H1 (cell line): ENCODE measurements at regions of chr5 and their contacts with region 1.

Region 1: GRCh38 chr5:147887024-147887627 is 8.6 kb downstream of the SCGB3A2 start:
- DNase-seq: no peak
- H3K4me3 ChIP-seq: no peak overlapping the region
- H3K27ac ChIP-seq: no peak overlapping the region
- H3K4me1 ChIP-seq: peaks cover 0 to 7% (median 0%) of the 10 kb centered on the region in 4 experiments; a peak in 4 of 7 replicates
- H3K27me3 ChIP-seq: no peaks in the 10 kb centered on the region
- CTCF ChIP-seq: peak in 2 of 3 experiments; percentile 43 to 50; a peak in 2 of 4 replicates
- EP300 ChIP-seq: no peak
- POLR2A ChIP-seq: no peak
- RAD21 ChIP-seq: peak; percentile 68 to 72

Region 2: DNA sequence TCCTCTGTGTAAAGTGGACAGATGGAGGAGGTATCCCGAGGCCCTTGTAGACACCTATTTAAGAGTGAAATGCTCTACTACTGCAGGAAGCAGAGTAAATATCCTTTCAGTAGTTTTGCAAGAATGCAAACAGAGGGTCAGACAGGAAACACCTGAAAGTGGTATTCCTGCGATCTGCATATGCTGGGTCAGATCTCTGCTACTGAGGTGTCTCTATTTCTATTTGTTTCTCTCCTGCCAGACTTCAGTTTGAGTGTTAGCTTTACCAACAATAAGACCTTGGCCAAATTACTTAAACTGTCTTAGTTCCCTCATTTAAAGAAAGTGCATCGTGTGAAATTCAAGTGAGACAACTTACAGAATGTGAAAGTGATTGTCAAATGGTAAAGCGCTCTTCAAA is 152.2 kb before region 1 on chr5:
- CTCF ChIA-PET with region 1: no interaction called
- POLR2A ChIA-PET with region 1: no interaction called
- DNase-seq: no peak
- H3K4me3 ChIP-seq: no peak overlapping the region
- H3K27ac ChIP-seq: no peak overlapping the region
- H3K4me1 ChIP-seq: peaks cover 0 to 1% (median 0%) of the 10 kb centered on the region in 4 experiments; a peak in 3 of 7 replicates
- H3K27me3 ChIP-seq: no peaks in the 10 kb centered on the region
- CTCF ChIP-seq: no peak
- EP300 ChIP-seq: no peak
- POLR2A ChIP-seq: no peak
- RAD21 ChIP-seq: no peak

Region 3: DNA sequence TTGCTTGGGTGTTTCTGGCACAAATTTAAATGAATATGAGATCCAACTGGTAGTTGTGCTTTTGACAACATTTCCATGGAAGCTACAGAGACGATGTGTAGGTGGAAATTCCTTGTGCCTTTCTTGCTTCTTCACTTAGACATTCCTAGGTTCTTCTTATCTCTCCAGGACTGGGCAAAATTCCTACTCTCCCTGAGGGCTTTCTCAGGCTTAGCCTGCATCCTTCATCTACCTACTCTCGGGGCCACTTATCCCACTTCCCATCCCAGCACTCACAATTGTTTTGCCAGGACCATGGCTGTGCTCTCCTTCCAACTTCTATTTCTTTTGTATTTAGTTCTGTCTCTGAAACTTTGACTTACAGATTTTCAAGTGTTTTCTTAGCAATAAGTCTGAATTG is 37.9 kb before region 1 on chr5:
- CTCF ChIA-PET with region 1: interaction called, 13 read pairs
- POLR2A ChIA-PET with region 1: interaction called, 730 read pairs
- DNase-seq: no peak
- H3K4me3 ChIP-seq: no peak overlapping the region
- H3K27ac ChIP-seq: no peak overlapping the region
- H3K4me1 ChIP-seq: no peaks in the 10 kb centered on the region
- H3K27me3 ChIP-seq: peaks cover 0 to 2% (median 0%) of the 10 kb centered on the region in 4 experiments; a peak in 1 of 7 replicates
- CTCF ChIP-seq: no peak
- EP300 ChIP-seq: no peak
- POLR2A ChIP-seq: no peak; a peak in 1 of 3 replicates
- RAD21 ChIP-seq: no peak

Region 4: GRCh38 chr5:147857302-147858129 is 29.6 kb before region 1 on chr5:
- CTCF ChIA-PET with region 1: interaction called, 69 read pairs
- POLR2A ChIA-PET with region 1: interaction called, 730 read pairs
- DNase-seq: peak; percentile 50 to 76
- H3K4me3 ChIP-seq: no peak overlapping the region
- H3K27ac ChIP-seq: no peak overlapping the region
- H3K4me1 ChIP-seq: peaks cover 2 to 16% (median 13%) of the 10 kb centered on the region in 4 experiments; a peak in 5 of 7 replicates
- H3K27me3 ChIP-seq: no peaks in the 10 kb centered on the region
- CTCF ChIP-seq: peak in 2 of 3 experiments; percentile 61 to 83; a peak in 3 of 4 replicates
- EP300 ChIP-seq: no peak
- POLR2A ChIP-seq: no peak; a peak in 1 of 3 replicates
- RAD21 ChIP-seq: peak; percentile 85 to 86

Region 5: DNA sequence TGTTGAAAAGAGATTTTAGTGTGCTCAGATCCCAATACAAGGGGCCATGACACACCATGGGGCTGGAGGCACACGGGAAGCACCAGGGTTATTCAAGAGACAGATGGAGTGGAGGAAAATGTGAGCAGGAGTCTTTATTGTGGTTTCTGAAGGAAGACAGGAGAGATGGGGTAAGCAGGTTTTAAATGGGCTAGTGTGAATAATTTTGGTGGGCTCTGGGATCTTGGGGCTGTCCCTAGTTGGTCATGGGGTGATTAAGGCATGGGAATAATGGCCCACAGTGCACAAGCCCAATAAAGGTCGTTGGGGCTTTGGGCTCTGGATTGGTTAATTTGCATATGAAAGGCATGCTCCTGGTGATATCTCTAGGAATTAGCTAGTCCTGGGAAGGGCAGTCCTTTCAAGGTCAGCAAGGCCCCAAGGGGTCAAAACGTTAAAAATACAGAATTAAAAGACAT is 12.2 kb before region 1 on chr5:
- CTCF ChIA-PET with region 1: interaction called, 7 read pairs
- POLR2A ChIA-PET with region 1: interaction called, 730 read pairs
- DNase-seq: no peak
- H3K4me3 ChIP-seq: peak overlapping the region; percentile 7 to 96 (median 46); a peak in 7 of 8 replicates
- H3K27ac ChIP-seq: peak overlapping the region; percentile 79
- H3K4me1 ChIP-seq: peaks cover 11 to 24% (median 18%) of the 10 kb centered on the region in 4 experiments; a peak in 6 of 7 replicates
- H3K27me3 ChIP-seq: no peaks in the 10 kb centered on the region
- CTCF ChIP-seq: no peak
- EP300 ChIP-seq: no peak
- POLR2A ChIP-seq: no peak
- RAD21 ChIP-seq: no peak

Region 6: GRCh38 chr5:147997486-147997885 is 110.4 kb after region 1 on chr5:
- CTCF ChIA-PET with region 1: no interaction called
- POLR2A ChIA-PET with region 1: no interaction called
- DNase-seq: no peak
- H3K4me3 ChIP-seq: no peak overlapping the region
- H3K27ac ChIP-seq: no peak overlapping the region
- H3K4me1 ChIP-seq: no peaks in the 10 kb centered on the region
- H3K27me3 ChIP-seq: no peaks in the 10 kb centered on the region
- CTCF ChIP-seq: no peak
- EP300 ChIP-seq: no peak
- POLR2A ChIP-seq: no peak
- RAD21 ChIP-seq: no peak